Mucosa of descending colon (tissue), 3 donors: ENCODE measurements at regions of chr17 and their contacts with region 1.

Region 1: DNA sequence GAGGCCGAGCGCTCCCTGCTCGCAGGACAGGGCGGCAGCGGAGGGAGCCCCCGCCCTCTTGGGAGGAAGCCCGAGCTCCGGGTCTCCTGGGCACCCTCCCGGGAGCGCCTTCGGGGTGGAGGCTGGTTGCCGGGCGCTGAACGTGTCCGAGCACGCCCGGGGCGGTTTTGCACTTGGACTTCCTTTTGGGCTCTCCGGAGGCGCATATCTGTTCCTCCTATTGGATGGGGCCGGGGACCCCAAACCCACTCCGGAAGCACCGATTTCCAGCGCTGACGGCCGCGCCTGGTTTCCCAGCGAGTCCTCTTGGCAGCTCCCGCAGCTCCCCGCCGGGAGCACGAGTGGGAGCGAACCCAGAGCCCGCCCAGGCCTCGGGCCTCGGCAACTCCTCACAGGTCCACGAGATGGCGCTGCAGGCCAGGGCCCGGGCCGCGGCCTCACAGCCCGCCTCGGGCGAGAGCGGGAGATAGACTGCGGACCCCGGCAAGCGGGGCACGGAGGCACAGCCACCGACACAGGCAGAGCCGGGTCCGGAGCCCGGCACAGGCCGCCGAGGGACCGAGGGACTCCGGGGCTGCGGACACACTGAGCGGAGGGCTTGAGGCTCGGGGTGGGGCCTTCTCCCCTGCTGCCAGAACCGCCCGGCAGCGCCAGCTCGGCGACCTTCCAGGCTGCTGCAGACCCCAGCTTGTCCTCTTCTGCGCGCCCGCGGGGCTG is 12.7 kb downstream of the TBX2 start:
- DNase-seq: peak; percentile 78 to 90 (median 82)
- ATAC-seq: peak; percentile 84
- H3K4me3 ChIP-seq: peak overlapping the region; percentile 17
- H3K4me1 ChIP-seq: peaks cover 31% of the 10 kb centered on the region
- CTCF ChIP-seq: peak; percentile 97

Region 2: DNA sequence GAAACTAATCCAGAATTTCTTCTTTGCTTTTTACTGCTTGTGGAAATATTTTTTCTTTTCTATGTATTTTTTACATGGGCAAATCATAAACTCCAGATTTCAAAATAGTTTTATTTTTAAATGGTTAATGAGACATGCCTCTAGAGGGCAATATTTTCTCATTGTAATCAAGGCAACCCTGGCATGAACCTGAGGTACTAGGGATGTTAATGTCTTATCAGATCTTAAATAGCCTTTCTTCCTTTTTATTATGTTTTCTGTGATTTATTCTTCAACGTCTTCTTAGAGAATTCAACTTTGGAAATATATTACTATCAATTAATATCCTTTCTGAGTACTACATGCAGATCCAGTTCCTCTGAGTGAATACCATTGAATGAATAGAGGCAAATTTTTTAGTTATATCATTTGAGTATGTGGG is 410.0 kb before region 1 on chr17:
- intact Hi-C with region 1: loop called in 1 of 2 experiments (anchors 10 kb)
- DNase-seq: no peak
- ATAC-seq: peak; percentile 37
- H3K4me3 ChIP-seq: no peak overlapping the region
- H3K4me1 ChIP-seq: no peaks in the 10 kb centered on the region
- CTCF ChIP-seq: no peak

Region 3: DNA sequence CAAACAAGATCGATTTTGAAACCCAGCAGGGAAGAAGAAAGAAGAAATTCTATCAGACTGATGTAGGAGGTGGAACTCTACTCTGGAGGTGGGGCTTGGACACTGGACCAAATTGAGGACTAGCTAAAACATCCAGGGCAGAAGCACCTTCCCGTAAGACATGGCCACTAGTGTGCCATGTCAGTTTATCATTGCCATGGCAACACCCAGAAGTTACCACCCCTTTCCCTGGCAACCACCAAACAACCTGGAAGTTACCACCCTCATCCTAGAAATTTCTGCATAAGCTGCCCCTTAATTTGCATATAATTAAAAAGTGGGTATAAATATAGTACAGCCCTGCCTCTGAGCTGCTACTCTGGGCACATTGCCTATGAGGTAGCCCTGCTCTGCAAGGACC is 112.0 kb after region 1 on chr17:
- intact Hi-C with region 1: no loop called
- DNase-seq: no peak
- ATAC-seq: no peak
- H3K4me3 ChIP-seq: no peak overlapping the region
- H3K4me1 ChIP-seq: no peaks in the 10 kb centered on the region
- CTCF ChIP-seq: no peak

Region 4: DNA sequence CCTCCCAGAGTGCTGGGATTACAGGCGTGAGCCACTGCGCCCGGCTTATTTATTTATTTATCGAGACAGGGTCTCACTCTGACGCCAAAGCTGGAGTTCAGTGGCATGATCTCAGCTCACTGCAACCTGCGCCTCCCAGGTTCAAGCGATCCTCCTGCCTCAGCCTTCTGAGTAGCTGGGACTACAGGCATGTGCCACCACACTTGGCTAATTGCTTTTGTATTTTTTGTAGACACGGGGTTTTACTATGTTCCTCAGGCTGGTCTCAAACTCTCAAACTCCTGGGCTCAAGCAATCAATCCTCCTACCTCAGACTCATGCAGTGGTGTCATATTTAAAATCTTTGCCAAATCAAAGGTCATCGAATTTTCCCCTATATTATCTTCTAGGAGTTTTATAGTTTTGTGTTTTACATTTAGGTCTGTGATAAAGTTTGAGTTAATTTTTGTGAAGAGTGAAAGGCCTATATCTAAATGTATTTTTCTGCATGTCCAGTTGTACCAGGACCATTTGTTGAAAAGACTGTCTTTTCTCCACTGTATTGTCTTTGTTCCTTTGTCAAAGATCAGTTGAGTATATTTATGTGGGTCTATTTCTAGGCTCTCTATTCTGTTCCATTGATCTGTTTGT is 131.6 kb after region 1 on chr17:
- intact Hi-C with region 1: loop called in 1 of 2 experiments (anchors 10 kb)
- DNase-seq: no peak
- ATAC-seq: no peak
- H3K4me3 ChIP-seq: no peak overlapping the region
- H3K4me1 ChIP-seq: no peaks in the 10 kb centered on the region
- CTCF ChIP-seq: no peak

Region 5: DNA sequence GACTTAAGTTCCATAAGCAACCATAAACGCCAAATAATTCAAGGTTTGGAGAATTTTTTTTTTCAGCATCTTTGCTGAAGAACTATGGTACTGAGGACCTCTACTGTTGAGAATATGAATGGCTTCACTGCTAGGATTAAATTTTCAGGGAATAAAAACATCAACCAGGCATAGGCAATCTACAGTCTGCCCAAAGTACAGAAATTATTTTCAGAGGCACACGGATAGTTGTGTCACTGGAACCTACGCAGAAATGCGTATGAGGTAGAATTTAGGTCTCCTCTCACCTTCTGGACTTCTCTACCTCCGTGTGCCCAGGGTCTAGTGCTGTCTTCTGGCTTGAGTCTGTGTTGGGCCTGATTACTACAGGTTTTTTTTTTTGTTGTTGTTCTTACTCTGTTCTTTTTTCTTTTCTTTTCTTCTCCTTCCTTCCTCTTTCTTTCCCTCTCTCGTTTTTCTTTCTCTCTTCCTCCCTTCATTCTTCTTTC is 139.0 kb after region 1 on chr17:
- intact Hi-C with region 1: loop called (anchors 10 kb)
- DNase-seq: no peak
- ATAC-seq: peak; percentile 47
- H3K4me3 ChIP-seq: no peak overlapping the region
- H3K4me1 ChIP-seq: no peaks in the 10 kb centered on the region
- CTCF ChIP-seq: peak; percentile 15

Region 6: GRCh38 chr17:61837175-61838051 is 425.1 kb after region 1 on chr17:
- intact Hi-C with region 1: loop called in 1 of 2 experiments (anchors 10 kb)
- DNase-seq: peak in 2 of 3 donors; percentile 49 to 80
- ATAC-seq: peak; percentile 68
- H3K4me3 ChIP-seq: no peak overlapping the region
- H3K4me1 ChIP-seq: no peaks in the 10 kb centered on the region
- CTCF ChIP-seq: peak; percentile 44